A673 (cell line): ENCODE measurements at regions of chr14 and their contacts with region 1.

Region 1: DNA sequence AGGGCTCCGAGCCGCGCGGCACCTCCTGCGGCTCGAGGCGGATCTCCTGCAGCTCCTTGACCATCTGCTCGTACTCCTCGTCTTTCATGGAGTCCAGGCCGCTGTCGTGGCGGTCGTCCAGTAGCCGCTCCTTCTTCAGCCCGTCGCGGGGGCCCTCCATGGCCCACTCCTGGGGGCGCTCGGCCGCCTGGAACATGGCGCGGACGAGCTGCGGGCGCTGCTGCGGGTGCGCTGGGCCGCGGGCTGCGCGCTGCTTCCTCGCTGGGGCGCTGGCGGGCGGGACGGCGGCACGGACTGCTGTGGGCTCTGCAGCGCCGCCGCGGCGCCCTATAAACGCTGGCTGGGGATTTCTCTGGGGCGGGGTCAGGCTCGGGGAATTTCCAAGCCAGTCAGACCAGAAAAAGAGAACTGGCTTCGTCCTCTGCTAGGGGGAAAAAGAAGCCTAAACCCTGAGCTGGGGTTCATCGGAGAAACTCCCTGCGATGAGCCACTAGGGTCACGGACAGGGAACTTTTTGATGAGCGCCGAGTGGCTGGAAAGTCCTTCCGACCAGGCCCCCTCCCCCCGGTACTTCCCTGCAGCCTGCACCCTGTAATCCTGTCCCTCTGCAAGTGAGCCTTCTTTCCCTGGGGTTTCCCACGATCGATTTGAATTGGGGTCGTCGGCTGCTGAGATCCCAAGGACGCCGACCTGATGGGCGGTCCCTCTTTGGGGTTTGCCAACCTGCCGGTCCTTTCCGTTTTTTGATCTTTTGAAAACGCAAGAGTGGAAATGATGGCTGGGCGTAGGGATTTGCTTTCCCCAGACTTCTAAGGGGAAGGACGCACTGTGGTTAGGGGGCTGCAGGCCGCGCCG is at the start of gene NFKBIA:
- DNase-seq: peak; percentile 93
- H3K4me3 ChIP-seq: peak within 1 kb of the TSS; percentile 95
- H3K27ac ChIP-seq: peak within 1 kb of the TSS; percentile 99
- H3K4me1 ChIP-seq: peaks cover 49% of the 10 kb centered on the region
- H3K27me3 ChIP-seq: no peaks in the 10 kb centered on the region
- CTCF ChIP-seq: peak; percentile 51
- total RNA-seq, gene NFKBIA: 69.9 and 73.9 TPM in 2 replicates

Region 2: DNA sequence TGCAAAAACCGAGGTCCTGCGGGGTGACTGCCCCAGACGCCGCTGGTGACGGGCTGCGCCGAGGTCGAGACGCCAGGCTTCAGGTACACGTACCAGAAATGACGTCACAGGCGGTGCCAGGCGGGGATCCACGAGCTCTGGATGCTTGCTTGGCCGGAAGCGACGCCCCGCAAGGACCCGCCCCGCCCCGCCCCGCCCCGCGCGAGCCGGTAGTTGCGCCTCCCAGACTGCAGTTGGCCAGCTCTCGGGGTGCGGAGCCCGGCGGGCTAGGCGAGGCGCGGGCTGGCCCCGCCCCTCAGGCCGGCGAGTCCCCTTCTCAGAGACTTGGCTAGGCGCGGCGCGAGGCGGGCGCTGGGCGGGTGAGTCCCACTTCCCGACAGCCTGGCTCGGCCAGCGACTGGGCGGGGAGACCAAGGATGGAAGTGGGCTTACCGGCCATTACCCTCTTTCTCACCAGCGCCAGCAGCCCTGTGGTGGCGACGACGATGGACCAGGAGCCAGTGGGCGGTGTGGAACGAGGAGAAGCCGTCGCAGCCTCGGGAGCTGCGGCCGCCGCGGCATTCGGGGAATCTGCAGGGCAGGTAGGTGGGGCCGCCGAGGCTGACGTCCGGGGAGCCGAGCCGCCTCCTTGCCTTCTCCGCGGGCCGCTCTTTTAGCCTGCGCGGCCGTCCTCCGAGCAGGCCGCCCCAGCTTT is 358.5 kb before region 1 on chr14 and contains the start of gene FAM177A1:
- CTCF ChIA-PET with region 1: no interaction called
- POLR2A ChIA-PET with region 1: no interaction called
- intact Hi-C with region 1: loop called (anchors 10 kb)
- DNase-seq: peak; percentile 97
- H3K4me3 ChIP-seq: peak within 1 kb of the TSS; percentile 81
- H3K27ac ChIP-seq: peak within 1 kb of the TSS; percentile 86
- H3K4me1 ChIP-seq: peaks cover 5% of the 10 kb centered on the region
- H3K27me3 ChIP-seq: no peaks in the 10 kb centered on the region
- CTCF ChIP-seq: no peak
- total RNA-seq, gene FAM177A1: 52.9 and 59.2 TPM in 2 replicates

Region 3: GRCh38 chr14:35215110-35215876 is 189.4 kb before region 1 on chr14:
- CTCF ChIA-PET with region 1: interaction called, 12 read pairs
- POLR2A ChIA-PET with region 1: interaction called, 4 read pairs
- intact Hi-C with region 1: no loop called
- DNase-seq: peak; percentile 60
- H3K4me3 ChIP-seq: no peak overlapping the region
- H3K27ac ChIP-seq: no peak overlapping the region
- H3K4me1 ChIP-seq: peaks cover 6% of the 10 kb centered on the region
- H3K27me3 ChIP-seq: no peaks in the 10 kb centered on the region
- CTCF ChIP-seq: peak; percentile 61

Region 4: GRCh38 chr14:35229495-35230089 is 175.1 kb before region 1 on chr14:
- CTCF ChIA-PET with region 1: interaction called, 5 read pairs
- POLR2A ChIA-PET with region 1: no interaction called
- intact Hi-C with region 1: loop called (anchors 2 kb)
- DNase-seq: peak; percentile 61
- H3K4me3 ChIP-seq: no peak overlapping the region
- H3K27ac ChIP-seq: no peak overlapping the region
- H3K4me1 ChIP-seq: peaks cover 53% of the 10 kb centered on the region
- H3K27me3 ChIP-seq: no peaks in the 10 kb centered on the region
- CTCF ChIP-seq: peak; percentile 68

Region 5: GRCh38 chr14:35292051-35292769 is 112.5 kb before region 1 on chr14 and contains the start of gene PSMA6:
- CTCF ChIA-PET with region 1: no interaction called
- POLR2A ChIA-PET with region 1: no interaction called
- intact Hi-C with region 1: loop called (anchors 5 kb)
- DNase-seq: peak; percentile 100
- H3K4me3 ChIP-seq: peak within 1 kb of the TSS; percentile 83
- H3K27ac ChIP-seq: peak within 1 kb of the TSS; percentile 90
- H3K4me1 ChIP-seq: peaks cover 17% of the 10 kb centered on the region
- H3K27me3 ChIP-seq: no peaks in the 10 kb centered on the region
- CTCF ChIP-seq: no peak
- total RNA-seq, gene PSMA6: 364 and 392 TPM in 2 replicates

Region 6: GRCh38 chr14:35416108-35416750 is 11.6 kb after region 1 on chr14:
- CTCF ChIA-PET with region 1: no interaction called
- POLR2A ChIA-PET with region 1: no interaction called
- intact Hi-C with region 1: no loop called
- DNase-seq: no peak
- H3K4me3 ChIP-seq: no peak overlapping the region
- H3K27ac ChIP-seq: no peak overlapping the region
- H3K4me1 ChIP-seq: peaks cover 7% of the 10 kb centered on the region
- H3K27me3 ChIP-seq: no peaks in the 10 kb centered on the region
- CTCF ChIP-seq: no peak

Region 7: DNA sequence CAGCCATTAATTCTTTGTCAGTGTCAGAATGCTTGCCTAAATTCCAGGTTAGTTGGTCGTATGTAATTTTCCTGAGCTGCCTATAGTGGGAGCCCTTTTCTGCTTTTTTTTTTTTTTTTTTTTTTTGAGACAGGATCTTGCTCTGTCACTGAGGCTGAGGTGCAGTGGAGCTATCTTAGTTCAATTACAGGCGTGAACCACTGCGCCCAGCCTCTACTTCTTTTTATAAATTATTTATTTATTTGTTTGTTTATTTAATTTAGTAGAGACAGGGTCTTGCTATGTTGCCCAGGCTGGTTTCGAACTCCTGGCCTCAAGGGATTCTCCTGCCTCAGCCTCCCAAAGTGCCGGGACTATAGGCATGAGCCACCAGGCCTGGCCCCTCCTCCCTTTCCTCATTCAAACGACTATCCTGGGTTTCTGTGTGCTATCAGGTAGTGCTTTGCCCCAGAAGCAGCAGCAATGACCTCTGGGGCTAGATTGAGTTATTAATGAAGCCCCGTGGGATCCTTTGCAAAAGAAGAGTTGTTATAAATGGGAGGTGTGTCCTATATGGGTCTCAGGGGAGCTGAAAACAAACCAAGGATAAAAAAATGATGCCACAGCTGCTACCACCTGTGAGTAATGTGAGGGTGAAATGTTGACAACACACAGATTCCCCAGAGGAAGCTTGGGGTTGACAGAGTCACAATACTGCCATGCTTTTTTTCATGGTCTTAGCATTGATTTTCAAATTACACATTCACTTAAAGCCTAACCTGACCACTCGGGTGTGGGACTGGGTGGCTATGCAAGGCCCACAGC is 34.4 kb after region 1 on chr14:
- CTCF ChIA-PET with region 1: no interaction called
- POLR2A ChIA-PET with region 1: no interaction called
- intact Hi-C with region 1: no loop called
- DNase-seq: peak; percentile 37
- H3K4me3 ChIP-seq: no peak overlapping the region
- H3K27ac ChIP-seq: no peak overlapping the region
- H3K4me1 ChIP-seq: no peaks in the 10 kb centered on the region
- H3K27me3 ChIP-seq: no peaks in the 10 kb centered on the region
- CTCF ChIP-seq: peak; percentile 71